Naive thymus-derived CD4-positive, alpha-beta T cell (primary cell): ENCODE measurements at regions of chr1 and their contacts with region 1.

Region 1: GRCh38 chr1:147242439-147243227 is at the start of gene CHD1L:
- DNase-seq: peak; percentile 84 to 94 (median 92)
- ATAC-seq: peak; percentile 97
- H3K4me3 ChIP-seq: peak within 1 kb of the TSS; percentile 90
- H3K4me3 Mint-ChIP-seq: peak within 1 kb of the TSS; percentile 89 to 98 (median 95)
- H3K27ac ChIP-seq: peak within 1 kb of the TSS; percentile 78
- H3K27ac Mint-ChIP-seq: peak within 1 kb of the TSS; percentile 32 to 89 (median 70)
- H3K4me1 ChIP-seq: peaks cover 7 to 16% of the 10 kb centered on the region in 2 donors
- H3K4me1 Mint-ChIP-seq: peaks cover 24 to 46% (median 42%) of the 10 kb centered on the region in 7 donors
- H3K27me3 ChIP-seq: no peaks in the 10 kb centered on the region
- H3K27me3 Mint-ChIP-seq: peaks cover 0 to 9% (median 0%) of the 10 kb centered on the region in 5 donors
- total RNA-seq, gene CHD1L: 26.4 to 53.9 (median 32.3) TPM

Region 2: GRCh38 chr1:147201276-147201675 is 41.4 kb before region 1 on chr1:
- CTCF ChIA-PET with region 1: no interaction called
- POLR2A ChIA-PET with region 1: no interaction called
- intact Hi-C with region 1: no loop called
- DNase-seq: no peak
- ATAC-seq: no peak
- H3K4me3 ChIP-seq: no peak overlapping the region
- H3K4me3 Mint-ChIP-seq: no peak overlapping the region
- H3K27ac ChIP-seq: no peak overlapping the region
- H3K27ac Mint-ChIP-seq: no peak overlapping the region
- H3K4me1 ChIP-seq: no peaks in the 10 kb centered on the region
- H3K4me1 Mint-ChIP-seq: peaks cover 0 to 4% (median 0%) of the 10 kb centered on the region in 7 donors
- H3K27me3 ChIP-seq: no peaks in the 10 kb centered on the region
- H3K27me3 Mint-ChIP-seq: no peaks in the 10 kb centered on the region

Region 3: GRCh38 chr1:147225193-147225730 is 17.4 kb before region 1 on chr1 and contains the start of gene FMO5:
- CTCF ChIA-PET with region 1: interaction called, 8 read pairs
- POLR2A ChIA-PET with region 1: interaction called, 10 read pairs
- intact Hi-C with region 1: loop called in 1 of 2 experiments (anchors 1 kb)
- DNase-seq: peak; percentile 21 to 54 (median 40)
- ATAC-seq: peak; percentile 95
- H3K4me3 ChIP-seq: peak within 1 kb of the TSS; percentile 70
- H3K4me3 Mint-ChIP-seq: peak within 1 kb of the TSS; percentile 89 to 99 (median 94)
- H3K27ac ChIP-seq: peak within 1 kb of the TSS; percentile 53
- H3K27ac Mint-ChIP-seq: peak within 1 kb of the TSS; percentile 67 to 92 (median 76)
- H3K4me1 ChIP-seq: peaks cover 0 to 5% of the 10 kb centered on the region in 2 donors
- H3K4me1 Mint-ChIP-seq: peaks cover 15 to 29% (median 21%) of the 10 kb centered on the region in 7 donors
- H3K27me3 ChIP-seq: no peaks in the 10 kb centered on the region
- H3K27me3 Mint-ChIP-seq: peaks cover 0 to 15% (median 0%) of the 10 kb centered on the region in 5 donors
- total RNA-seq, gene FMO5: 0.29 to 4.3 (median 0.70) TPM